ENCODE measurements at regions of chr13 and their contacts with region 1.

Region 1: DNA sequence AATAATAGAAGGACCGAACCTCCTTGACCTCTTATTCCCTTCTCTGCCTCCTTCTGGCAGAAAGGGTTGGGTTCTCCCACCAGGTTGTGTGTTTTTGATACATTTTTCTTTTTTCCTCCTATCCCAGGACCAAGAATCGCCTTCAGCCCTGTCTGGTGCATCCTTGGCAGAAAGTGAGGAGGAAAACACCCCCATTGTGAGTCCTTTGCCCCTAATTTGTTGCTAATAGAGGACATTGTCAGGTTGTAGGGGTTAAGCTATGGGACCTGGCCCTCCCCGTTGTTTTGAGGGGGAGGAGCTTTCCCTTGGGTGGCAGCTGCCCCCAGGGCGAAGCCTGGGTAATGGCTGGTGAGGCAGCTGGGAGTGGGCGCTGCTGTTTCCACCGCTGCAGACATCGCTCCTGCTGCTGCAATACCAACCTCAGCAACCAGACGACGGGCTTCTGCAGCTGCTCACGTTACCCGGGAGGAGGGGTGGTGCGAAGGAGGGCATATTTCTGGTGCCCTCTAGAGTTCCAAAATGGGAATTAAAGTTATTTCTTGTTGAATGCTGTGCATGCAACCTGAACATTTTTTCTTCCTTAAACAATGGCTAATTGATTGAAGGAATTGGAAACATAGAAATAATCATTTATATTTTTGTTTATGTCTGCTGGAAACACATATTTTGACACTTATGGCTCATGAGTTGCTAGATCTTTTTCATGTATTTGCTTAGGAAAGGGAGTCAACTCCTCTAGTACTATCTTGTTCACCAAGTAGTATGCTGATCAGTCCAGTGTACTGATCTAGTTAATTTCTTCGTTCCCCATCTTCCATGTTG is 1.5 kb downstream of the ZMYM2 start:
- DNase-seq: peak; percentile 86
- ATAC-seq: peak; percentile 72

Region 2: GRCh38 chr13:19633479-19634255 is 326.4 kb before region 1 on chr13 and contains the start of gene MPHOSPH8:
- intact Hi-C with region 1: loop called (anchors 5 kb)
- DNase-seq: peak; percentile 97
- ATAC-seq: peak; percentile 100
- total RNA-seq, gene MPHOSPH8: 51.0 TPM

Region 3: DNA sequence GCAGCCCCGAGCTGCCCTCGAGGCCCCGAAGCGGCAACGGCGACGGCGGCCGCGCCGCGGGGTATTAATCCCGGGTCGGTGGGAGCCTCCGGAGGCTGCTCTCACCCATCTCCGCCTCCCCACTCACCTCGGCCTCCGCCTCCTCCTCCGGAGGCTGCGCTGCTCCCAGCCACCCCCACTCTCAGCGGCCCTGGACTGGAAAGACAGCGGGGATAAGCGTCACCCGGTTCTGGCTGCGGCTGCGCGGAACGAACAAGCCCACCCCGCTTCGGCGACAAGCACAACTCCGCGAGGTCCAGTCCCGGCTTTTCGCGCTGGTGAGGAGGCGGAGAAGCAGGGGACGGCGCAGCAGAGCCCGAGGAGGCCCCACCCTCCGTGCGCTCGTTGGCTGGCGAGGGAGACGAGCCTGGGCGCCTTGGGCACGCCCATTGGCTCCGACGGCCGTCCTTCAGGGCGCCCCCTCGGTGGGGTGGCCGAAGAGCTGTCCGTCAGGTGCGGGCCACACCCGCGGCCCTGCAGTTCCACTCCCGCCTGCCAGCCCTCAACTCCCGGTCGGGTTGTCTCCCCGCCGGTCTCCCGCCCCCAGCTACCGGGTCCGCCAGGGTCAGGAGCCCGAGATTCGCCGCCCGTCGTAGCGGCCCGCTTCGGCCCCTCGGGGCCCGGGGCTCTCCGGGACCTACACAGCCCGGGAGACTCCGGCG is 96.6 kb before region 1 on chr13 and contains the start of gene ZMYM5:
- intact Hi-C with region 1: loop called (anchors 10 kb)
- DNase-seq: peak; percentile 99
- ATAC-seq: peak; percentile 99
- total RNA-seq, gene ZMYM5: 19.9 TPM